ENCODE measurements at regions of chr6 and their contacts with region 1.

Region 1: GRCh38 chr6:45922728-45923351 is 92.8 kb downstream of the CLIC5 start:
- DNase-seq: peak; percentile 54 to 95 (median 78)

Region 2: GRCh38 chr6:44475779-44476434 is 1446.9 kb before region 1 on chr6:
- intact Hi-C with region 1: loop called (anchors 2 kb)
- DNase-seq: peak; percentile 70 to 98 (median 86)

Region 3: GRCh38 chr6:44655412-44656342 is 1267.2 kb before region 1 on chr6:
- intact Hi-C with region 1: loop called (anchors 2 kb)
- DNase-seq: peak; percentile 35 to 96 (median 78)

Region 4: DNA sequence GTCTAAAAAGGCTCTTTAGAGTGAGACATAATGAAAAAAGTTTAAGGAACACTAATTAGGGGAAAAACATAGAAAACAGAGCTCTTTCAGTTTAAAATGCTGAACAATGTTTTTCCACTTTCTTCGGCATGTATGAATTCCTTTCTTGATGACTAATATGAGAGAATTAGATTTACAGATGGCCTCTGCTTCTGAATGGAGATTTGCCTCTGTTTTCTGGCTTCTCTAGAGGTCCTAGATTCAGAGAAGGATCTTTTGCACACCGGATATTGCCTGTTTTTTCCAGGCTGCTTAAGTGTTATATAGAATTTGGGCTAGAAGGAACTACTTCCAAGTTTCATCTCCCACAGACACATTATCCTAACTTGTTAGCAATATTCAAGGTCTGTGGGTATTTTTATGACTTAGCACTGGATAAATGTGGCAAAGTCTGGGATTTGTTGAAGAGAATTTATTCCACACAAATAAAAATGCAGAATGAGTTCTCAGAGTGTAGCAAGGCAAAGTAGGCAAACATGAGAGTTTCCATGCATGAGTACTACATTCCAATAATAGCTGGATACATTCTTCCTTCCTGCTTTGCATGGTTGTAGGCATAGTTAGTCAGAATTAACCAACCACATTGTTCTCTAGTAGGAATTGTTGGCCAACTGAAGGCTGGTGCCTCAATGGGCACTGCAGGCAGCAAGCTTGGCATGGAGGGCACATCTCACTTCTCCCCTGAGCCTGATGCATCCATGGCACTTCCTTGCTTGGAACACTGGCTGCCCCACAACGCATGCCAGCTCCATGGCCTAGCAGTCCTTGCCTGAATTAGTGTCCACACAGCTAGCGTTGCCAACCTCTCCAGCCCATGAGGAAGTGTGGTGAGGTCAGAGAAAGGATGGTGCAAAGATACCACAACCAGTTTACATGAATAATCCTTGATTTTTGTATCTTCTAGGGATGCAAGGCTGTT is 131.3 kb before region 1 on chr6:
- intact Hi-C with region 1: loop called (anchors 5 kb)
- DNase-seq: no peak